ENCODE measurements at regions of chr2 and their contacts with region 1.

Region 1: GRCh38 chr2:216108967-216109921 is at the start of gene XRCC5:
- DNase-seq: peak; percentile 76
- H3K4me3 ChIP-seq: peak within 1 kb of the TSS; percentile 94
- CTCF ChIP-seq: no peak

Region 2: GRCh38 chr2:216082117-216082711 is 27.0 kb before region 1 on chr2:
- CTCF ChIA-PET with region 1: interaction called, 10 read pairs
- POLR2A ChIA-PET with region 1: no interaction called
- DNase-seq: no peak
- H3K4me3 ChIP-seq: peak overlapping the region; percentile 87
- CTCF ChIP-seq: no peak

Region 3: GRCh38 chr2:216119986-216120385 is 10.7 kb after region 1 on chr2:
- CTCF ChIA-PET with region 1: interaction called, 64 read pairs
- POLR2A ChIA-PET with region 1: no interaction called
- DNase-seq: no peak
- H3K4me3 ChIP-seq: no peak overlapping the region
- CTCF ChIP-seq: no peak

Measured in AG04449 (cell line).